HEK293 (cell line): ENCODE measurements at regions of chr5 and their contacts with region 1.

Region 1: DNA sequence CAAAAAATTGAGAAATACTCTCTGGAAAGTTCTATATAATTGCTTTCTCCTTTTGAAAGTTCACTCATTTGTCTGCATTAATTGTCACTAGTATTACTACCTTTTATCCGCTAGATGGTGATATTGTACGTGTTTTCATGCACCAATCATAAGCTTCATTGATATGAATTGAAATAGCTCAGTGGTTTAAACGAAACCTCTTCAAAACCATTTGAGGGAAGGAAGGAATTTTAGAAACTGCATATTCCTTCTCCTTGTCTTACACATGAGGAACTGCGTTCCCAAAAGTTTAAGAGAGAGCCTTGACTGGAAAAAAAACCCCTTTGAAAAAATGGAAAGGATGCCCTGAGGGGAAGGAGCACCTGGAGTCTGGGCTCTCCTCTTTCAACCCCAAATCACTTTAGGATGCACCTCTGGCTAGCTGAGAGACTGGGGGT is 98.6 kb downstream of the YTHDC2 start:
- H3K4me3 ChIP-seq: no peak overlapping the region
- H3K27ac ChIP-seq: no peak overlapping the region
- H3K4me1 ChIP-seq: no peaks in the 10 kb centered on the region
- CTCF ChIP-seq: peak; percentile 19; the same call in 1 of the 2 replicates

Region 2: GRCh38 chr5:113601423-113601822 is 10.7 kb before region 1 on chr5:
- CTCF ChIA-PET with region 1: interaction called, 11 read pairs
- POLR2A ChIA-PET with region 1: no interaction called
- H3K4me3 ChIP-seq: no peak overlapping the region
- H3K27ac ChIP-seq: no peak overlapping the region
- H3K4me1 ChIP-seq: no peaks in the 10 kb centered on the region; the same call in 1 of the 2 replicates
- CTCF ChIP-seq: no peak

Region 3: DNA sequence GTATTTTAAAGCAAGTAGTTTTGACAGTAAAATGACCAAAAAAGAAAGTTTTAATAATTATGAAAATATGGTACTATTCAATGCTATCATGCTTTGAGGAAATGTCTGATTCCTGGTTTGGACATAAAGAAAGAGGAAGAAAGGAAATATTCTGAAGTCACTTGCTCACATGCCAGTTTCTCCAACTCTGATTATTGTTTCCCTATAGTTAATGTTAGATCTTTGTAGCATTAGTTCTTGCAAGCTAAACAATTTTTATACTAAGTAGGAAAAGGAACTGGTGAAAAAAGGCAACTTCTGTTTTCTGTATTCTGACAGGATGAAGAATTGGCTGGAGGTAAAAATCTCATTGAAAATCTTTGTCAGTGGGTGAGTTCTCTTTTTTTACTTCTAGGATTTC is 20.9 kb after region 1 on chr5:
- CTCF ChIA-PET with region 1: interaction called, 12 read pairs
- POLR2A ChIA-PET with region 1: no interaction called
- H3K4me3 ChIP-seq: no peak overlapping the region
- H3K27ac ChIP-seq: no peak overlapping the region
- H3K4me1 ChIP-seq: no peaks in the 10 kb centered on the region
- CTCF ChIP-seq: no peak

Region 4: GRCh38 chr5:113652161-113652560 is 40.1 kb after region 1 on chr5:
- CTCF ChIA-PET with region 1: interaction called, 10 read pairs
- POLR2A ChIA-PET with region 1: no interaction called
- H3K4me3 ChIP-seq: no peak overlapping the region
- H3K27ac ChIP-seq: no peak overlapping the region
- H3K4me1 ChIP-seq: no peaks in the 10 kb centered on the region
- CTCF ChIP-seq: no peak

Region 5: DNA sequence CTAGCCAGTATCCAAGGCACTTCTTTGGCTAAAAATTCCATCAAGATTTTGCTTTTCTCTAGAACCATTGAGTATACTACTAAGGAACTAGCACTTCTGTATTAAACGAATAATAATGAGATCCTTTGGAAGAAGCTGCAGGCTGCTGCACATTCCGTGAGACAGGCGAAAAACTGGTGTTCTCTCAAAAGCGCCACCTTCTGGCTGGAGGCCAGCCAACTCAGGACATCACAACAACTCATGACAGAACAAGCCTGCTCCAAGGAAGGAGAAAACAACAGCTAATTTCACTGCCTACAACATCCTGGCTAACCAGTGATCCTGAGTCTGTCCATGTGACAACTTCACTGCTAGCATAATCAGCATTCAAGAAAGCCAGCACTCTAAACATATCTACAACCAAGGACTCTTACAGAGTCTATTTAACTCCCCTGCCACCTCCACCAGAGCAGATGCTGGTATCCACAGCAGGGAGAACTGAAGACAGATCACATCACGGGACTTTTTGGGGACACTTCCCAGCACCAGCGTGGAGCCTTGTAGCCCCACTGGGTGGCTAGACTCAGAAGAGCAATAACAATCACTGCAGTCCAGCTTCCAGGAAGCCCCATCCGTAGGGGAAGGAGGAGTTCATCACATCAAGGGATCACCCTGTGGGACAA is 51.9 kb after region 1 on chr5:
- CTCF ChIA-PET with region 1: interaction called, 40 read pairs
- POLR2A ChIA-PET with region 1: no interaction called
- H3K4me3 ChIP-seq: no peak overlapping the region
- H3K27ac ChIP-seq: no peak overlapping the region
- H3K4me1 ChIP-seq: no peaks in the 10 kb centered on the region
- CTCF ChIP-seq: no peak

Region 6: GRCh38 chr5:114449860-114450421 is 837.9 kb after region 1 on chr5:
- CTCF ChIA-PET with region 1: interaction called, 23 read pairs
- POLR2A ChIA-PET with region 1: no interaction called
- H3K4me3 ChIP-seq: no peak overlapping the region
- H3K27ac ChIP-seq: no peak overlapping the region
- H3K4me1 ChIP-seq: no peaks in the 10 kb centered on the region
- CTCF ChIP-seq: peak; percentile 69